ENCODE measurements at regions of chr9 and their contacts with region 1.

Region 1: GRCh38 chr9:37036776-37037502 is 2.9 kb upstream of the PAX5 start:
- DNase-seq: peak; percentile 90
- ATAC-seq: peak; percentile 35
- H3K4me3 ChIP-seq: peak overlapping the region; percentile 42 to 95 (median 86)
- H3K4me3 Mint-ChIP-seq: peak overlapping the region; percentile 89
- H3K27ac ChIP-seq: peak overlapping the region; percentile 98 to 100
- H3K27ac Mint-ChIP-seq: peak overlapping the region; percentile 96
- H3K4me1 ChIP-seq: peaks cover 42 to 64% of the 10 kb centered on the region in 2 donors
- H3K4me1 Mint-ChIP-seq: peaks cover 62% of the 10 kb centered on the region
- H3K27me3 ChIP-seq: no peaks in the 10 kb centered on the region
- H3K27me3 Mint-ChIP-seq: no peaks in the 10 kb centered on the region
- CTCF ChIP-seq: no peak

Region 2: DNA sequence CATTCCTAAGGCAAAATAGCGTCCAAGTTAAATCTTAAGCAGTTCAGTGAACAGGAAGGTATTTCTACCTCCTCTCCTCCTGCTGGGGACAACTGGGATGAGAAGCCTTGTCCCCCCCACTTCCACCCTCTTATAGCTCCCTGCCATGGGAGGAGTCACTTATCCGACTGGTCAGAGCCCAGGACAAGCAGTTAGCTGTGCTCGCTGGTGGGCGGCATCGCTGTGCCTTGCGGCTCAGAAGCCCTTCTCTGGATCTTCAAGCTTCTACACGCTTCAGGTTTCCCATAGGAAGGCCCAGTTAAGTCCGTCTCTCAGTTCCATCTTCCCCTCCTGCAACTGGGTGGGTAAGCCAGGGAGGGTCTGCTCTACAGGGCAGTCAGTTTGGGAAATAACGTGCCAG is 80.0 kb before region 1 on chr9:
- CTCF ChIA-PET with region 1: no interaction called
- POLR2A ChIA-PET with region 1: no interaction called
- intact Hi-C with region 1: no loop called
- DNase-seq: no peak
- ATAC-seq: no peak
- H3K4me3 ChIP-seq: no peak overlapping the region
- H3K4me3 Mint-ChIP-seq: no peak overlapping the region
- H3K27ac ChIP-seq: peak overlapping the region in 1 of 2 donors; percentile 65
- H3K27ac Mint-ChIP-seq: peak overlapping the region; percentile 74
- H3K4me1 ChIP-seq: peaks cover 0 to 5% of the 10 kb centered on the region in 2 donors
- H3K4me1 Mint-ChIP-seq: peaks cover 61% of the 10 kb centered on the region
- H3K27me3 ChIP-seq: no peaks in the 10 kb centered on the region
- H3K27me3 Mint-ChIP-seq: no peaks in the 10 kb centered on the region
- CTCF ChIP-seq: no peak

Region 3: GRCh38 chr9:37004424-37004935 is 32.5 kb before region 1 on chr9:
- CTCF ChIA-PET with region 1: interaction called, 17 read pairs
- POLR2A ChIA-PET with region 1: interaction called, 24 read pairs
- intact Hi-C with region 1: no loop called
- DNase-seq: peak; percentile 78
- ATAC-seq: peak; percentile 46
- H3K4me3 ChIP-seq: peak overlapping the region; percentile 28 to 77 (median 61)
- H3K4me3 Mint-ChIP-seq: peak overlapping the region; percentile 75
- H3K27ac ChIP-seq: peak overlapping the region; percentile 77 to 83
- H3K27ac Mint-ChIP-seq: peak overlapping the region; percentile 99
- H3K4me1 ChIP-seq: peaks cover 97% of the 10 kb centered on the region in 2 donors
- H3K4me1 Mint-ChIP-seq: peaks cover 93% of the 10 kb centered on the region
- H3K27me3 ChIP-seq: no peaks in the 10 kb centered on the region
- H3K27me3 Mint-ChIP-seq: no peaks in the 10 kb centered on the region
- CTCF ChIP-seq: no peak

Region 4: DNA sequence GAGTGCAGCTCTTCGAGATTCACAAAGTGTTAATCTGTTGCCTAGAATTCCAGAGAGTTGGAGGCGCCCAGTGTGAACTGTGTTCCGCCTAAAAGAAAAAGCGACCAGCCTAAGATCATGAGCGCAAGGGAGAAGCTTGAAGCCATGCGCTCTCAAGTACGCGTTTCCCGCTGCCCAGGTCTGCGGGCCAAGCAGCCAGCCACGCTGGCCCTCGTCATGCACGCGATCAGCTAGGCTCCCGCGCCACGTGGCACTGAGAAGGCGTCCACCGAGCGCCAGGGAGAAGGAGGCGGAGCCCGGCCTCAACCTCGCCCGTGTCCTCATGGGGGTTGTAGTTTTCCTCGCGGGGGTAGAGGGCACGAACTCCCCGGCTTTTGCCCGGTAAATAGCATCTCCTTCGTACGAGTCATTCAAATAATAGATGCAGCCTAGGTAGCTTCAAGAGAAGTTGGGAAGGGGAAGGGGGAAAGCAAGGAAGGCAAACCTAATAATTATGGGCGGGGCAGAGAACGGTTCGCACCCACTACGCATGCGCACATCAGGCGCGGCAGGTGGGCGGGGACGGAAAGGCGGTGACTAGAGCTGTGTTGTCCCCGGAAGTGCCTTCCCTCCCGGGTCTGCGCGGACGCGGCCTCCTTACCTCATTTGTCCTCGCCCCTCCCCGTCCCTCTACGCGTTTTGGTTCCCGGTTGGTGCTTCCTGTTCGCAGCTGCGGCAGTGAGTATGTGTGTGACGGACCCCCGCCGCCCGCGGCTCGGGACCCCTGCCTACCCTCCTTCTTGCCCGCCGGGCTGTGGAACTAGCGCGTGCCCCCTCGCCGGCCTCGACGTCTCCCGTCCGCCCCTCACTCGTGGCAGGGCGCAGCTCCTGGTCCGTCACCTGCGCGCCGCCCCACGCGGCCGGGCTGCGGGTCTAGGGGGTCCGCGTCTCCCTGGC is 83.2 kb after region 1 on chr9 and contains the start of gene ZCCHC7:
- CTCF ChIA-PET with region 1: interaction called, 15 read pairs
- POLR2A ChIA-PET with region 1: interaction called, 40 read pairs
- intact Hi-C with region 1: loop called (anchors 1 kb)
- DNase-seq: peak; percentile 98
- ATAC-seq: peak; percentile 92
- H3K4me3 ChIP-seq: peak within 1 kb of the TSS; percentile 80 to 97 (median 94)
- H3K4me3 Mint-ChIP-seq: peak within 1 kb of the TSS; percentile 100
- H3K27ac ChIP-seq: peak within 1 kb of the TSS; percentile 93 to 98
- H3K27ac Mint-ChIP-seq: peak within 1 kb of the TSS; percentile 100
- H3K4me1 ChIP-seq: peaks cover 36 to 44% of the 10 kb centered on the region in 2 donors
- H3K4me1 Mint-ChIP-seq: peaks cover 44% of the 10 kb centered on the region
- H3K27me3 ChIP-seq: no peaks in the 10 kb centered on the region
- H3K27me3 Mint-ChIP-seq: no peaks in the 10 kb centered on the region
- CTCF ChIP-seq: no peak
- total RNA-seq, gene ZCCHC7: 81.9 and 83.5 TPM in 2 replicates

Region 5: DNA sequence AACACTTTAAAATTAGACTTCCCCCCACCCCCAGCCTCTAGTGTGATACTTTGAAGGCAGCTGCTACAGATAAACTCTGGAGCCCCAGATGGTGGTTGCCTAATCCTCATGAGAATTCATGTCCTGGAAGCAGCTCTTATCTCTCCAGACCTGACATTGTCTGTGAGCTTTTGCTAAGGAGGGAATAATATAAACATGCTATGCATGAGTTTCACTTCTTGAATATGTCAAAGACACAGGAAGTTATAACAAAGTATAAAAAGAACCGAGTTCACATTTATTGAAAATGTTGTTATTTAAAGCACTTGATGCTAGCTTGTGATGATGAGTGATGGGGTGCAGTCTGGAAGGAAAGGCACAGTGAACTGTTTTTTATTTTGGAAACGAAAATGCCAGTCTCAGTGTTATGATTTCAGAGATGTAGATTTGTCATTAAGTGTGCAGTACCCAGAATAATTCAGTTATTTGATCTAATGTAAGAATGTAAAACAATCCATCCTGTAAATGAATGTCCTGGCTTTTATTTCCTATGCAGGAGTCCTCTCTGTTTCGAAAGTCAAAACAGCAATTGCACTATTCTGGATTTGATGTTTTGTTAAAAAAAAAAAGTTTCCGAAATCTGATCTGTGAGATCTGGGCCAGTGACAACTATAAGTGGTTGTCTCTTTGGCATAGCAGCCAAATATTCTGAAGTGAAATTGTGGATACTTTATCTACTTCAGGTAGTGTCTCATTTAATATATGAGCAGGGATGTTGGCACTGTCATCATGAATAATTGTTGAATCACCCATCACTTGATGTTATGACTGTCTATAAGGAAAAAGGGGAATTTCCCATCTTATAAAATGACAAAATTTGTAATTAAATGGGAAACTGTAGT is 160.5 kb after region 1 on chr9:
- CTCF ChIA-PET with region 1: no interaction called
- POLR2A ChIA-PET with region 1: interaction called, 10 read pairs
- intact Hi-C with region 1: loop called (anchors 2 kb)
- DNase-seq: peak; percentile 83
- ATAC-seq: peak; percentile 79
- H3K4me3 ChIP-seq: peak overlapping the region in 3 of 5 experiments; percentile 13 to 35 (median 21)
- H3K4me3 Mint-ChIP-seq: peak overlapping the region; percentile 76
- H3K27ac ChIP-seq: peak overlapping the region; percentile 81 to 87
- H3K27ac Mint-ChIP-seq: peak overlapping the region; percentile 87
- H3K4me1 ChIP-seq: peaks cover 83 to 91% of the 10 kb centered on the region in 2 donors
- H3K4me1 Mint-ChIP-seq: peaks cover 82% of the 10 kb centered on the region
- H3K27me3 ChIP-seq: no peaks in the 10 kb centered on the region
- H3K27me3 Mint-ChIP-seq: no peaks in the 10 kb centered on the region
- CTCF ChIP-seq: no peak

Region 6: GRCh38 chr9:37309136-37309535 is 272.2 kb after region 1 on chr9:
- CTCF ChIA-PET with region 1: interaction called, 19 read pairs
- POLR2A ChIA-PET with region 1: interaction called, 3 read pairs
- intact Hi-C with region 1: no loop called
- DNase-seq: peak; percentile 77
- ATAC-seq: peak; percentile 82
- H3K4me3 ChIP-seq: no peak overlapping the region
- H3K4me3 Mint-ChIP-seq: peak overlapping the region; percentile 16
- H3K27ac ChIP-seq: peak overlapping the region; percentile 5 to 64
- H3K27ac Mint-ChIP-seq: peak overlapping the region; percentile 84
- H3K4me1 ChIP-seq: peaks cover 27 to 42% of the 10 kb centered on the region in 2 donors
- H3K4me1 Mint-ChIP-seq: peaks cover 35% of the 10 kb centered on the region
- H3K27me3 ChIP-seq: no peaks in the 10 kb centered on the region
- H3K27me3 Mint-ChIP-seq: no peaks in the 10 kb centered on the region
- CTCF ChIP-seq: peak; percentile 76

Region 7: DNA sequence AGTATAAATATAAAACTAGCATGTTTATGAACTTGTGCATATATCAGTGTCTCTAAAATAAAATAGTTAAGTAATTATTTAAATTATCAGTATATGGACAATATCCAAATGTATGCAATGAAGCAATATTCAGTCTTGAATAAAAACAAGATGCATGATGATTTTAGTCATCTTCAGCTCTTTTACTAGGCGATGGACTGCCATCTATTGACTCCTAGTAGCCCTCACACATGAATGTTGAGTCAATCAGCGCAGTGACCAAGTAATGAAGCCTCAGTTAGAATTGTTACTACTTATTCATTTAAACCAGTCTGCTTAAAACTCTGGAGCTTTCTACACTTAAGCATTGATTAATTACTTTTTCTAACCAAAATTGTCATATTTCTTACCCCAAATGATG is 292.6 kb after region 1 on chr9:
- CTCF ChIA-PET with region 1: interaction called, 50 read pairs
- POLR2A ChIA-PET with region 1: interaction called, 33 read pairs
- intact Hi-C with region 1: loop called (anchors 1 kb)
- DNase-seq: peak; percentile 75
- ATAC-seq: peak; percentile 40
- H3K4me3 ChIP-seq: no peak overlapping the region
- H3K4me3 Mint-ChIP-seq: peak overlapping the region; percentile 44
- H3K27ac ChIP-seq: peak overlapping the region in 1 of 2 donors; percentile 4
- H3K27ac Mint-ChIP-seq: peak overlapping the region; percentile 90
- H3K4me1 ChIP-seq: peaks cover 25 to 84% of the 10 kb centered on the region in 2 donors
- H3K4me1 Mint-ChIP-seq: peaks cover 58% of the 10 kb centered on the region
- H3K27me3 ChIP-seq: no peaks in the 10 kb centered on the region
- H3K27me3 Mint-ChIP-seq: no peaks in the 10 kb centered on the region
- CTCF ChIP-seq: peak; percentile 82

Region 8: GRCh38 chr9:37408933-37409710 is 372.2 kb after region 1 on chr9:
- CTCF ChIA-PET with region 1: interaction called, 4 read pairs
- POLR2A ChIA-PET with region 1: no interaction called
- intact Hi-C with region 1: loop called (anchors 2 kb)
- DNase-seq: peak; percentile 99
- ATAC-seq: peak; percentile 82
- H3K4me3 ChIP-seq: no peak overlapping the region
- H3K4me3 Mint-ChIP-seq: peak overlapping the region; percentile 78
- H3K27ac ChIP-seq: peak overlapping the region; percentile 72 to 91
- H3K27ac Mint-ChIP-seq: peak overlapping the region; percentile 97
- H3K4me1 ChIP-seq: peaks cover 58 to 72% of the 10 kb centered on the region in 2 donors
- H3K4me1 Mint-ChIP-seq: peaks cover 78% of the 10 kb centered on the region
- H3K27me3 ChIP-seq: no peaks in the 10 kb centered on the region
- H3K27me3 Mint-ChIP-seq: no peaks in the 10 kb centered on the region
- CTCF ChIP-seq: peak; percentile 31

Measured in B cell (primary cell).